PC-3 (cell line): ENCODE measurements at regions of chr7 and their contacts with region 1.

Region 1: DNA sequence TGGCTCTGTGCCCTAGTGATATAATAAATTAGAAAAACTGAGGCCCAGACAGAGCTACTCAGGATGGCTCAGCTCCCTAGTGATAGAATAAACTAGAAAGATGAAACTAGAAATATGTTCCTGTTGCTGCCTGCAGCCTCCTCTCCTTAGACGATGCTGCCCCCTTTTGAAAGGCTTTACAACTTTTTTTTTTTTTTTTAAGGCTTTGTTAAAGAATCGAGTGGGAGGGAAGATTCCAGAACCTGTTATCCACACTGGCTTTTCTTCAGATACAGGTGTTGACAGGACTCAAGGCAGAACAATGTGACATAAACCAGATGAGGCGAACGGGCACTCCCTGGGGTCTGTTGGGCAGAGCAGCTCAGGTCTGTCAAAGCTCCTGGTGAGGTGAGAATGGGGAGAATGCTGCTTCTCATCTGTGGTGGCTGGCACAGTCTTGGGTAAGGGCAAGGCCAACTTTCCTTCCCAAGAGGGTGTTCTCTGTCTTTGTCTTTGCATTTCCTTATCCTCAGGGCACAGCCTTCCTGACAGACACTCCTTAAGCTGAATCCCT is 175.1 kb downstream of the COBL start:
- DNase-seq: peak; percentile 60
- ATAC-seq: peak; percentile 58
- H3K4me3 ChIP-seq: no peak overlapping the region
- H3K27ac ChIP-seq: no peak overlapping the region
- H3K4me1 ChIP-seq: peaks cover 18% of the 10 kb centered on the region
- H3K27me3 ChIP-seq: no peaks in the 10 kb centered on the region
- CTCF ChIP-seq: peak; percentile 84

Region 2: GRCh38 chr7:50610521-50611277 is 530.8 kb before region 1 on chr7:
- CTCF ChIA-PET with region 1: no interaction called
- POLR2A ChIA-PET with region 1: no interaction called
- intact Hi-C with region 1: loop called (anchors 2 kb)
- DNase-seq: peak; percentile 88
- ATAC-seq: peak; percentile 97
- H3K4me3 ChIP-seq: no peak overlapping the region
- H3K27ac ChIP-seq: no peak overlapping the region
- H3K4me1 ChIP-seq: peaks cover 15% of the 10 kb centered on the region
- H3K27me3 ChIP-seq: no peaks in the 10 kb centered on the region
- CTCF ChIP-seq: no peak

Region 3: GRCh38 chr7:50696810-50697582 is 444.5 kb before region 1 on chr7:
- CTCF ChIA-PET with region 1: interaction called, 6 read pairs
- POLR2A ChIA-PET with region 1: no interaction called
- intact Hi-C with region 1: loop called (anchors 5 kb)
- DNase-seq: peak; percentile 46
- ATAC-seq: peak; percentile 53; the same call in 1 of the 2 replicates
- H3K4me3 ChIP-seq: no peak overlapping the region
- H3K27ac ChIP-seq: no peak overlapping the region
- H3K4me1 ChIP-seq: no peaks in the 10 kb centered on the region
- H3K27me3 ChIP-seq: no peaks in the 10 kb centered on the region
- CTCF ChIP-seq: peak; percentile 73

Region 4: DNA sequence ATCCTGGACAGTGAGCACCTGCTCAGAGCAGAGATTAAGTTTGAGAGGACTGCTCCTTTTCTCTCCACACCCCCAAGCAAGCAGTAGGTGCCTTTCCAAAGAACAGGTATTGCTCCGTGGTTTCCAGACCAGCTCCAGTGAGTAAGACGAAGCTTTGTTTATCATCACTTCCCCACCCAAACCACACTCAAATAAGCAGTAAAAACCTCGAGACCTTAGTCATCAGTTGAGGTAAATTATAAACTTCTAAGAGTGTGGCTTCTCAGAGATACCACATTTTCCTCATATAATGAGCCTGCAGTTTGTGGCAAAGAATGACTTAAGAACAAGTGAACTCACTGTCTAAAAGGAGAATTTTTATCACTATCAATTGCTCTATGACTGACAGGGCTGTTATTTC is 308.8 kb before region 1 on chr7:
- CTCF ChIA-PET with region 1: no interaction called
- POLR2A ChIA-PET with region 1: no interaction called
- intact Hi-C with region 1: loop called (anchors 2 kb)
- DNase-seq: peak; percentile 97
- ATAC-seq: peak; percentile 92
- H3K4me3 ChIP-seq: no peak overlapping the region
- H3K27ac ChIP-seq: peak overlapping the region; percentile 98
- H3K4me1 ChIP-seq: peaks cover 60% of the 10 kb centered on the region
- H3K27me3 ChIP-seq: no peaks in the 10 kb centered on the region
- CTCF ChIP-seq: no peak

Region 5: GRCh38 chr7:50869108-50869725 is 272.3 kb before region 1 on chr7:
- CTCF ChIA-PET with region 1: no interaction called
- POLR2A ChIA-PET with region 1: no interaction called
- intact Hi-C with region 1: no loop called
- DNase-seq: peak; percentile 87
- ATAC-seq: peak; percentile 93
- H3K4me3 ChIP-seq: peak overlapping the region; percentile 27; the same call in 1 of the 2 replicates
- H3K27ac ChIP-seq: peak overlapping the region; percentile 85
- H3K4me1 ChIP-seq: peaks cover 30% of the 10 kb centered on the region
- H3K27me3 ChIP-seq: no peaks in the 10 kb centered on the region
- CTCF ChIP-seq: no peak

Region 6: GRCh38 chr7:51079483-51079882 is 62.0 kb before region 1 on chr7:
- CTCF ChIA-PET with region 1: interaction called, 7 read pairs
- POLR2A ChIA-PET with region 1: no interaction called
- intact Hi-C with region 1: loop called (anchors 2 kb)
- DNase-seq: no peak
- ATAC-seq: peak; percentile 72
- H3K4me3 ChIP-seq: no peak overlapping the region
- H3K27ac ChIP-seq: no peak overlapping the region
- H3K4me1 ChIP-seq: no peaks in the 10 kb centered on the region
- H3K27me3 ChIP-seq: no peaks in the 10 kb centered on the region
- CTCF ChIP-seq: no peak

Region 7: DNA sequence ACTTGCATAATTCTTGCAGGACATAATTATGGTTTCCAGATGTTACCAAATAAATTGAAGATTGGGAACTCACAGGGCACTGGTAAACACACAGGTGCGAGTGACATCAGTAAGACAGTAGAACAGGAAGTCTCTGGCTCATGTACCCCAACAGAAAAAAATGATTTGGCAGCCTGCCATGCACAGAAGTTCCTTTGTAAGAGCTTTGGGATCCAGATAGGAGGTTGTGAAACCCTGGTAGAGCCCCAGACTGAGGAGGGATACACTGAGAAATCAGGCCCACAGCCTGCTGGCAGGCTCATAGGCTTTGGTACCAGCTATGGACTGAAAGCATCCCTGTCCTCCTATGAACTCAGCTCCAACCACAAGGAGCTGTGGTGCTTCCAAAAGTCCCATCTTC is 57.1 kb after region 1 on chr7:
- CTCF ChIA-PET with region 1: no interaction called
- POLR2A ChIA-PET with region 1: no interaction called
- intact Hi-C with region 1: no loop called
- DNase-seq: no peak
- ATAC-seq: no peak
- H3K4me3 ChIP-seq: no peak overlapping the region
- H3K27ac ChIP-seq: no peak overlapping the region
- H3K4me1 ChIP-seq: no peaks in the 10 kb centered on the region
- H3K27me3 ChIP-seq: no peaks in the 10 kb centered on the region
- CTCF ChIP-seq: no peak

Region 8: GRCh38 chr7:51246258-51247245 is 105.0 kb after region 1 on chr7:
- CTCF ChIA-PET with region 1: no interaction called
- POLR2A ChIA-PET with region 1: no interaction called
- intact Hi-C with region 1: no loop called
- DNase-seq: no peak
- ATAC-seq: no peak
- H3K4me3 ChIP-seq: no peak overlapping the region
- H3K27ac ChIP-seq: no peak overlapping the region
- H3K4me1 ChIP-seq: peaks cover 17% of the 10 kb centered on the region
- H3K27me3 ChIP-seq: no peaks in the 10 kb centered on the region
- CTCF ChIP-seq: no peak